WTC11 (cell line): ENCODE measurements at regions of chr15 and their contacts with region 1.

Region 1: DNA sequence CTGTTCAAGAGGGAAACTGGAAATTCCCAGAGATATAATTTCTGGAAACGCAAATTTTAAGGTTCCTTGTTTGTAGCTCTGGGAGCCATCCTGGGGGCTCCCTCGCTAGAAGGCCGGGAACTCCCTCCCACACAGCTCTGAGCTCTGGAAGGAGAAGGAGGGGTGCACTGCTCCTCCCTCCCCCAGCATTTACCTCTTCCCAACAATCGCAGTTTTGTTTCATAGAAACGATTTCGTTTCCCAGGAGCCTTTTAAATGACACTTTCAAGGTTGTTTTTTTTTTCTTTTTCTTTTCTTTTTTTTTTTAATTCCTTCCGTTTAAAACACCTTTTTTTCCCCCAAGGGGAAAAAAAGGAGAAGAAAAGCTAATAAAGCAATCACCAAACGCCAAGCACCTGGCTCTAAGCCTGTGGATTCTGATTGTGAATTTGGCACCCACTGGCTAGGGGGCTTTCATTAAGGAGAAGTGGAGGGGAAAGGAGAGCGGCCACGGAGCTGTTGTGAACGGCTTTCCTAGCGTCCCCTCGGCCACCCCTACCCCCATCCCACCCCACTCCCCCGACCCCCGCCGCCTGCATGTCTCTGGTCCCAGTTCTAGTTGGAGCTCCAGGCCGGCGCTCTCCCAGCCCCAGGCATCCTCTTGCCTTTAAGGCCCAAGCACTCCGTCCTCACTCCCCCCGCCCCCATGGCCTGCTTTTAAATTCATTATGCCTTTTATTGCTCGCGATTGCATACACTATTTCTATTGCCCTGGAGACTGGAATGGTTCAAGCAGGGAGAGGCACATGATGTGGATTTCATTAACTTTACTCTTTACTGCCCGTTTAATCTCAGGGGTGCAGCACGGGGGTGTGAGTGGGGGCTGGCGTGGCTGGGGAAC is 13.6 kb upstream of the CCDC33 start:
- DNase-seq: no peak
- ATAC-seq: no peak
- H3K4me3 Mint-ChIP-seq: peak overlapping the region; percentile 49
- H3K27ac Mint-ChIP-seq: no peak overlapping the region
- H3K4me1 Mint-ChIP-seq: peaks cover 54% of the 10 kb centered on the region
- H3K27me3 Mint-ChIP-seq: peaks cover 90% of the 10 kb centered on the region
- CTCF ChIP-seq: no peak

Region 2: DNA sequence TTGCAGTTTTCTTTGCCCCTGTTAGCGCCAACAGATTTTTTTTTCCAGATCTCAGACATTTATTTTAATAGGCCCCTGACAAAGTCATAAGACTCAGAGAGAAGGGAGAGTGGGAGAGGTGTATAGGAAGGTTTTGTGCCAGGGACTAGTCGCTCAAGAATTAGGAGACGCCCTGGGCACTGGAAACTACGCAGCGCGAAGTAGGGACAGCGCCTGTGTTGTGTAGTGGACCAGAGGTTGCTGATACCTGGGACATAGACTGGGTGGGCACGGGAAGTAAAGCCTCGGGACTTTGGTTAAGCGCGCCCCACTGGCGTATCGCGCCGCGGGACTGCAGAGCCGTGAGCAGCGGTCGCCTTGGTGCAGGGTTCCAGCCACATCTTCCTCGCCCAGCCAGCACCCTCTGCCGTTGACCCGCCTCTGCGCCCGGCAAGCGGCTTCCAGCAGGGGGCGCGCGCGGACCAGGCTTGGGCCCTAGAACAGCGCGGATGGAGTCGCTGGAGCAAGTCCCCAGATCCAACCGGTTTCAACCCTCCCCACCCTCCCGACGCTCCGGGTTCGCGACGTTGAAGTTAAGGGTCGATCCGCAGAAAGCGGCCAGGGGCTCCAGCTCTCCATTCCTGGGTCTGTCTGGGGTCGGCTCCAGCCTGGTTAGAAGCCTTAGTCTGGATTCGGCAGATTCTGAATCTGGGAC is 95.1 kb before region 1 on chr15:
- CTCF ChIA-PET with region 1: interaction called, 13 read pairs
- POLR2A ChIA-PET with region 1: no interaction called
- DNase-seq: peak; percentile 98
- ATAC-seq: peak; percentile 69
- H3K4me3 Mint-ChIP-seq: peak overlapping the region; percentile 73
- H3K27ac Mint-ChIP-seq: no peak overlapping the region
- H3K4me1 Mint-ChIP-seq: peaks cover 60% of the 10 kb centered on the region
- H3K27me3 Mint-ChIP-seq: peaks cover 76% of the 10 kb centered on the region
- CTCF ChIP-seq: peak; percentile 99

Region 3: DNA sequence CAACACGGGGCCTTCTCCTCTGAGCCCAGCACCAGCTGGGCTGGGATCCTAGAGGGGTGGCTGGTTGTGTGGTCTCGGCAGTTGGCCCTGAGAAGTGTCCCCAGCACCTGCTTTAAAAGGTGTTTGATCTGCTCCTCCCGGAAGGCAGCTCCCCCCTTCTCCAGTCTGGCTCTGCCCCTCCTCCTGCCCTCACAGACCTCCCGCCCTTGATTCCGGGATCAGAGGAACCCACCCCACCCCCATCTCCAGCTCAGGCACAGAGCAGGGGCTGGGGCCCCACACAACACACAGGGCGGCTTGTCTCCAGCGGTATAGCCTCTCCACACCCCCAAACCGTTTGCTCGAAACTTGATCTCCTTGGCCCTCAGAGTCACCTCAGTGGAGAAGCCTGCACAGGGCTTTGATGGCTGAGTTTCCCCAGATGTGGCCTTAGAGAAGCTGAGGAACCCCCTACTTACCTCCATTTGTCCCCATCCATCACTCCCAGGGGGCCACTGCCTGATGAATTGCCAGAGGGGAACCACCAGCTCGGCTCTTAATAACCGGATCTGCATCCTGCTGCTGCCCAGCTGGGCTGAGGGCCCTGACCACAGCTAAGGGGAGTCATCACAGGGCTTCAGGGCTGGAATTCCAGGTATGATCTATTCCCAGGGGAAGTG is 13.4 kb before region 1 on chr15:
- CTCF ChIA-PET with region 1: interaction called, 36 read pairs
- POLR2A ChIA-PET with region 1: no interaction called
- DNase-seq: peak; percentile 71
- ATAC-seq: peak; percentile 70
- H3K4me3 Mint-ChIP-seq: peak overlapping the region; percentile 44
- H3K27ac Mint-ChIP-seq: peak overlapping the region; percentile 91
- H3K4me1 Mint-ChIP-seq: peaks cover 80% of the 10 kb centered on the region
- H3K27me3 Mint-ChIP-seq: peaks cover 20% of the 10 kb centered on the region
- CTCF ChIP-seq: no peak